ENCODE measurements at regions of chr22 and their contacts with region 1.

Region 1: DNA sequence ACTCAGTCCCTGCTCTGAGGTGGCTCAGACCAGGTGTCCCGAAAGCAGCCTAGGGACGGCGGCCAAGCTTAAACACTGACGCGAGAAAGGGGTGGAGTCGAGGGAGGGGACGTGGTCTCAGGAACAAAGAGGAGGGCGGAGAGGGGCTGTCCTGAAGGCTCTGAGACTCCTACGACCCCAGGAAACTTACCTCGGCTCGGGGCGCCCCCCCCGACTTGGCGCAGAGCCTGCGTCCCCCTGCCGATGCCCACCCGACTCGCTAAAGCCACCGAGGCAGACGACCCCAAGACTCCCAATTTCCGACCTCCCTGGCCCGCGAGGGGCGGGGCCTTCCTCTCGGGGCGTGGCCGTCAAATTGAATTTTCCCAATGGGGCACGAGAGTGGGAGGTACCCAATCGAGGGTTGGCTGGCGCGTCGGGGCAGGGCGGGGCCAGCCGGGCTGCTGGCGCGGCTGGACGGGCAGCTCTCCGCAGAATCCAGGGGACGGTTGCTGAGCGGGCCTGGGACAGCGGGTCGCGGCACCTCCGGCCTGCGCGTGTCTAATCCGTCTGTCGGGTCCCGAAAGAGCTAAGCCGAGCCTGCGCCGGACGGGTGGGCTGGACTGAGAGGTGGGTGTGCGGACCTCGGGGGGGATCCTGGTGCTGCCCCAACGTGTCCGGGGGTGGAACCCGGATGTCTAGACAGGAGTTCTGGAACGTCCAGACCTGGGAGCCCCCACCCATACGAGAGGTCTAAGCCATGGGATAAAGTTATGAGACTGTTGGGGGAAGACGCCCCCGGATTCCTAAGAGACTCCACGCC is at the start of gene SMTN:
- DNase-seq: peak; percentile 92
- H3K4me3 ChIP-seq: peak within 1 kb of the TSS; percentile 73
- H3K27ac ChIP-seq: peak within 1 kb of the TSS; percentile 29
- H3K4me1 ChIP-seq: peaks cover 46% of the 10 kb centered on the region
- CTCF ChIP-seq: peak; percentile 39; the same call in 1 of the 2 replicates
- total RNA-seq, gene SMTN: 13.5 and 16.9 TPM in 2 replicates

Region 2: GRCh38 chr22:30212363-30212995 is 868.6 kb before region 1 on chr22:
- CTCF ChIA-PET with region 1: no interaction called
- POLR2A ChIA-PET with region 1: no interaction called
- intact Hi-C with region 1: no loop called
- DNase-seq: no peak
- H3K4me3 ChIP-seq: no peak overlapping the region
- H3K27ac ChIP-seq: no peak overlapping the region
- H3K4me1 ChIP-seq: no peaks in the 10 kb centered on the region
- CTCF ChIP-seq: no peak

Region 3: DNA sequence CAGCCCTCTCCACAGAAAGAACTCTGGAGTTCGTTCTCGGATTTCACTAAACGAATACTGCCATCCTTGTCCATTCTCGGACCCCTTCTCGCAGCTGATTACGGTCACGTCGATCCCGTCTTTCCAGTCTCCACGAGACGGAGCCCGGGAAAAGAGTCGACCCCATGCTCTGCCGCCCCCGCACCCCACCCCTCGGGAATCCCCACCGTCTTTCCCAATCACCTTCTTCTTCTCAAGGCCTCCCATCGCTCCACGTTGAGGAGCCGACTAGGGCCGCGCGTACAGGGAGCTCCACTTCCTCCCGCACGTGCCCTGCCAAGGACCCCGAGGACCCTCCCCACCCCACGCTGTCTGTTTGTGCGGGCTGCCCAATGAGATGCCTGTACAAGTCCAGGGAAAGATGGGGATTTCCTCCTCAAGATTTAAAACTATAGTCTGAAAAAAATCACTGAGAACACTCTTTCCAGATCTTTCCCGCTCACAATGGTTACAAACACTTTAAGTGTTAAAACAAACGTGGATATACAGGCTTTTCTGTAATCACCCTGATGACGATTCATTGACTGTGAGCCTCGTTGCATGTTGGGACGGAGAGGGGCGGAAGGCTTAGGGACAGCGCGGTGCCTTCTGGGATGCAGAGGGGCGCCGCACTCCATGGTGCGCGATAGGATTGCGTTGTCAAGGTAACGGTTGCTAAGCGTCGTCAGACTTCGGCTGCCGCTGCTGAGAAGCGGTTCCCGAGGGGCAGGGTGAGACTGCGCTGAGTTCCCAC is 489.3 kb before region 1 on chr22 and contains the start of gene PES1:
- CTCF ChIA-PET with region 1: no interaction called
- POLR2A ChIA-PET with region 1: no interaction called
- intact Hi-C with region 1: loop called (anchors 5 kb)
- DNase-seq: peak; percentile 99
- H3K4me3 ChIP-seq: peak within 1 kb of the TSS; percentile 95
- H3K27ac ChIP-seq: peak within 1 kb of the TSS; percentile 49
- H3K4me1 ChIP-seq: peaks cover 11% of the 10 kb centered on the region
- CTCF ChIP-seq: no peak
- total RNA-seq, gene PES1: 78.2 and 83.4 TPM in 2 replicates

Region 4: GRCh38 chr22:30634471-30635233 is 446.4 kb before region 1 on chr22:
- CTCF ChIA-PET with region 1: no interaction called
- POLR2A ChIA-PET with region 1: no interaction called
- intact Hi-C with region 1: loop called (anchors 10 kb)
- DNase-seq: peak; percentile 89
- H3K4me3 ChIP-seq: peak overlapping the region; percentile 74
- H3K27ac ChIP-seq: peak overlapping the region; percentile 32
- H3K4me1 ChIP-seq: peaks cover 16% of the 10 kb centered on the region
- CTCF ChIP-seq: peak; percentile 94

Region 5: GRCh38 chr22:30763815-30764686 is 317.0 kb before region 1 on chr22:
- CTCF ChIA-PET with region 1: no interaction called
- POLR2A ChIA-PET with region 1: no interaction called
- intact Hi-C with region 1: loop called (anchors 5 kb)
- DNase-seq: peak; percentile 64
- H3K4me3 ChIP-seq: no peak overlapping the region
- H3K27ac ChIP-seq: no peak overlapping the region
- H3K4me1 ChIP-seq: no peaks in the 10 kb centered on the region
- CTCF ChIP-seq: peak; percentile 80

Region 6: DNA sequence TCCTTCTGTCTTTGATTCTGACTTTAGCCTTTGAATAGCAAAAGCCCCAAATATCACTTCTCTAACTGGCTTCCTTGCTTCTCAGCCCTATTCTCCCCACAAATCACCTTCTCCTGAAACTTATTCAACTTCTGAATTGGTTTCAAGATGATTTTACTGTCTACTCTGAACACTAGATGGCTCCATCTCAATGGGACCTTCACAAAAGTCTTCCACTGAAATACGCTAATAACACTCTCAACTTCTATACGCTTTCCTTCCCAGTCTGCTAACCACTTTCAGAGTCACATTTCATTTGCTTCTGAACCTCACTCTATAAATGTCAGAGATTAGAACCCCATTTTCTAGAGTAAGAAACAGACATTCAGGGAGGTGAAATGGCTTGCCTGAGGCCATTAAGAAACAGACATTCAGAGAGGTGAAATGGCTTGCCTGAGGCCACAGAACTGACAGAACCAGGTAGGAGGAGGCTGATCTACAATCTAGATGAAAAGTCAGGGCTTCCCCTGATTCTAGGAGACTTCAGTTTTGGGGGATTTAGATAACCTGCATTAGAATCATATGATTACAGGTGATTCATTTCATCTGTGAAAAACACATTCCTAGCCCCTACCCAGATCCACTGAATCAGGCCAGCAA is 133.1 kb before region 1 on chr22:
- CTCF ChIA-PET with region 1: interaction called, 3 read pairs
- POLR2A ChIA-PET with region 1: no interaction called
- intact Hi-C with region 1: loop called (anchors 2 kb)
- DNase-seq: peak; percentile 44
- H3K4me3 ChIP-seq: no peak overlapping the region
- H3K27ac ChIP-seq: no peak overlapping the region
- H3K4me1 ChIP-seq: no peaks in the 10 kb centered on the region
- CTCF ChIP-seq: peak; percentile 80

Region 7: DNA sequence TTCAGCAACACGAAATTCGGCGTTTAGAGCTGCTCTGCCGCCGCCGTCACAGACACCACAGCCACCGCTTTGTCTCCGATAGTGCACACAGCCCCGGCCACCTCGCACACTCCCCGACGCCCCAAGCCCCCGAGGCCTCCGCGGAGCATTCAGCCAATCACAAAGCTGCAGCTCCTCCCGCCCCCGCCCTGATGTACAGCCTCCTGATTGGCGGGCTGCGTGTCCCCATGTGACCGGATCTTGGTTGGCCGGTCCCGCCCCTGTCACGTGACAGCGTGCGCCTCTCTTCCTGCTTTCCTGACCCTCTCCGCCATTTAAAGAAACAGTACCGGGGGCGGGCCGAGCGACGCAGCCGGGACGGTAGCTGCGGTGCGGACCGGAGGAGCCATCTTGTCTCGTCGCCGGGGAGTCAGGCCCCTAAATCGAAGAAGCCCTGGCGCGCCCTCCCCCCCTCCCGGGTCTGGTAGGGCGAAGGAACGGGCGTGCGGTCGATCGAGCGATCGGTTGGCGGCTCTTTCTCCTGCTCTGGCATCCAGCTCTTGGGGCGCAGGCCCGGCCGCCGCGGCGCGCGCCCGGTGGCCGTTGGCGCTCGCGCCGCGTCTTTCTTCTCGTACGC is 112.0 kb before region 1 on chr22 and contains the start of gene TUG1:
- CTCF ChIA-PET with region 1: no interaction called
- POLR2A ChIA-PET with region 1: interaction called, 6 read pairs
- intact Hi-C with region 1: loop called (anchors 1 kb)
- DNase-seq: peak; percentile 98
- H3K4me3 ChIP-seq: peak within 1 kb of the TSS; percentile 81
- H3K27ac ChIP-seq: peak within 1 kb of the TSS; percentile 88
- H3K4me1 ChIP-seq: peaks cover 60% of the 10 kb centered on the region
- CTCF ChIP-seq: no peak
- total RNA-seq, gene TUG1: 60.1 and 70.3 TPM in 2 replicates

Region 8: GRCh38 chr22:31211862-31212730 is 131.0 kb after region 1 on chr22 and contains the start of gene LIMK2:
- CTCF ChIA-PET with region 1: no interaction called
- POLR2A ChIA-PET with region 1: no interaction called
- intact Hi-C with region 1: loop called (anchors 5 kb)
- DNase-seq: peak; percentile 96
- H3K4me3 ChIP-seq: peak within 1 kb of the TSS; percentile 97
- H3K27ac ChIP-seq: no peak within 1 kb of the TSS
- H3K4me1 ChIP-seq: peaks cover 16% of the 10 kb centered on the region
- CTCF ChIP-seq: peak; percentile 90
- total RNA-seq, gene LIMK2: 16.2 and 24.8 TPM in 2 replicates

Measured in OCI-LY7 (cell line).